ENCODE measurements at regions of chrX and their contacts with region 1.

Region 1: DNA sequence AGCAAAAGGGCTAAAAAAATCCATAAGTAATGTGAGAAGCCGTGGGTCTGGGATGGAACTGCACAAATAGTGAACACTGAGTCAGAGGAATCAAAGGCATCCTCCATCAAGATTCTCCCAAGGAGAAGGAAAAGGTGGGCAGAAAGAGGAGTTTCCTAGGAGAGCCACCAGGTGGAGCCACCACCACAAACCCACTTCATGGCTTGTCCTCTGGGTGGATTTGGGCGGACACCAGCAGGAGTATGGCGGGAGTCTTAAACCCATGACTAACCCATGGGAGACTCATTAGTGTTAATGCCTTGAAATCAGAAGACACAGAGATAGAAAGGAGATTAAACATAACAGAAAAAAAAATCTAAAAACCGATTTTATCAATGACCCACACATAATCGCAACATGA is 147.7 kb downstream of the SH3KBP1 start:
- DNase-seq: peak; percentile 58
- H3K4me3 ChIP-seq: no peak overlapping the region
- H3K27ac ChIP-seq: no peak overlapping the region
- H3K4me1 ChIP-seq: peaks cover 74% of the 10 kb centered on the region
- CTCF ChIP-seq: peak; percentile 78

Region 2: GRCh38 chrX:19593690-19594089 is 146.0 kb before region 1 on chrX:
- CTCF ChIA-PET with region 1: no interaction called
- POLR2A ChIA-PET with region 1: no interaction called
- intact Hi-C with region 1: loop called (anchors 5 kb)
- DNase-seq: peak; percentile 48
- H3K4me3 ChIP-seq: no peak overlapping the region
- H3K27ac ChIP-seq: no peak overlapping the region
- H3K4me1 ChIP-seq: no peaks in the 10 kb centered on the region
- CTCF ChIP-seq: peak; percentile 72

Region 3: DNA sequence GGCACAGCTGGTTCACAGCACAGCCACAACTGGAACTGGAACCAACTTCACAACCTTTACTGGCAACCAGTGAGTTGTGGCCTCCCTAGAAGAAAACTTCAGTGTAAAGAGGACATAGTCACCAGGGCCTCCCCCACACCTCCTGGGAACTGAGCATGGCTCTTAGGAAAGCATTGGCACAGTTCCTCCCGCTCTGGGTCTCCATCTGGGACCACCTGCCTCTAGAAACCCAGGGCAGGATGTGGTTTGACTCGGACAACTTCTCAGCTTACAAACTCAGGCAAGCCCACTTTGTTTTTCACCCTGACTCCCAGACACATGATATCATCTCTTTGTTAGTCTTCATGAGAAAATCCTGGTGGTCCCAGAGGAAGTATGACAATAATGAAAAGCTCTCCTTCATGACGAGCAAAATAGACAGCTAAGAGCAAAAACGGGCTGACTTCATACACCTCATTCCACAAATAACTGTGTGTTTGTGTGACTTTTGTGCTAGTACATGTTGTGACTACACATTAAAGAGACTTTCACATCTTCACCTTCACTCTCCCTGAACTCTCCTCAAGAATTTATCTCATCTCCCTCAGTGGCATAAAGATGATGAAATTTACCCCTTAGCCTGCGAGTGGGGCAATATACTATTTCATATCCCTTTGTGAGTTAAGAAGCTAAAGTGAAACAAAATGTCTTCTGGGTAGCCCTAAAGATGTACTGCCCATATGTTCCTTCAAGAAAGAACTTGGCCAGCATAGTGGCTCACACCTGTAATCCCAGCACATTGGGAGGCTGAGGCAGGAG is 72.3 kb after region 1 on chrX:
- CTCF ChIA-PET with region 1: no interaction called
- POLR2A ChIA-PET with region 1: interaction called, 4 read pairs
- intact Hi-C with region 1: loop called (anchors 5 kb)
- DNase-seq: peak; percentile 68
- H3K4me3 ChIP-seq: peak overlapping the region; percentile 43
- H3K27ac ChIP-seq: peak overlapping the region; percentile 77
- H3K4me1 ChIP-seq: peaks cover 81% of the 10 kb centered on the region
- CTCF ChIP-seq: no peak

Region 4: GRCh38 chrX:19887911-19888879 is 148.5 kb after region 1 on chrX:
- CTCF ChIA-PET with region 1: no interaction called
- POLR2A ChIA-PET with region 1: interaction called, 3 read pairs
- intact Hi-C with region 1: loop called (anchors 1 kb)
- DNase-seq: peak; percentile 73
- H3K4me3 ChIP-seq: peak overlapping the region; percentile 96
- H3K27ac ChIP-seq: peak overlapping the region; percentile 44
- H3K4me1 ChIP-seq: peaks cover 41% of the 10 kb centered on the region
- CTCF ChIP-seq: peak; percentile 70

Region 5: GRCh38 chrX:19947612-19948011 is 207.9 kb after region 1 on chrX:
- CTCF ChIA-PET with region 1: no interaction called
- POLR2A ChIA-PET with region 1: no interaction called
- intact Hi-C with region 1: no loop called
- DNase-seq: no peak
- H3K4me3 ChIP-seq: no peak overlapping the region
- H3K27ac ChIP-seq: no peak overlapping the region
- H3K4me1 ChIP-seq: no peaks in the 10 kb centered on the region
- CTCF ChIP-seq: no peak

Region 6: GRCh38 chrX:20066968-20067708 is 327.5 kb after region 1 on chrX:
- CTCF ChIA-PET with region 1: interaction called, 3 read pairs
- POLR2A ChIA-PET with region 1: no interaction called
- intact Hi-C with region 1: loop called (anchors 5 kb)
- DNase-seq: peak; percentile 67
- H3K4me3 ChIP-seq: no peak overlapping the region
- H3K27ac ChIP-seq: no peak overlapping the region
- H3K4me1 ChIP-seq: peaks cover 17% of the 10 kb centered on the region
- CTCF ChIP-seq: peak; percentile 78